Prostate gland (tissue), 2 donors: ENCODE measurements at regions of chr1 and their contacts with region 1.

Region 1: DNA sequence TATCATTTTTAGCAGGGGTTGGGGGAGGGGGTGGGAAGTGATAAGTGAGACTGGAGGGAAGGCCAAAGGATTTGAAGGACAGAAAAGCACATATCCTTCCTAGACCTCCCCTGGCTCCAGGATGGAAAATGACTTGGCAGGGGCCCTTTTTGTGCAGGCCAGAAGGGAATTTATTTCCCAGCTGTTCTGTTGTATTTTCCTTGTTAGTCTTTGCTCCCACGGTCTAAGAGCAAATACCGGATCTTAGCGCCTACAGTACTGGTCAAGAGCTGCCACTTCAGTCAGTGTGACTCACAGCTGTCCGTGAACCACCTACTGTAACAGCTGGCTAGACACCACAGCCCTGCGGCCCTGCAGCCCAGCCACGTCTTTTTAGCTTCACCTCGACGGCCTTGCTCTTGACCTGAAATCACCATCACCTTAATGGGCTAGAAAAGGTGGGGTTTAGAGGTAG is 51.0 kb upstream of the ERRFI1 start:
- DNase-seq: peak; percentile 48
- H3K4me3 ChIP-seq: no peak overlapping the region
- H3K27ac ChIP-seq: peak overlapping the region; percentile 77 to 85
- H3K4me1 ChIP-seq: peaks cover 9% of the 10 kb centered on the region
- H3K27me3 ChIP-seq: no peaks in the 10 kb centered on the region
- CTCF ChIP-seq: peak in 1 of 4 experiments; percentile 14
- POLR2A ChIP-seq: no peak

Region 2: GRCh38 chr1:8040586-8040985 is 36.6 kb before region 1 on chr1:
- intact Hi-C with region 1: no loop called
- DNase-seq: peak; percentile 92
- H3K4me3 ChIP-seq: no peak overlapping the region
- H3K27ac ChIP-seq: peak overlapping the region; percentile 41 to 58
- H3K4me1 ChIP-seq: no peaks in the 10 kb centered on the region
- H3K27me3 ChIP-seq: no peaks in the 10 kb centered on the region
- CTCF ChIP-seq: no peak
- POLR2A ChIP-seq: no peak

Region 3: GRCh38 chr1:8121261-8122170 is 44.4 kb after region 1 on chr1:
- intact Hi-C with region 1: loop called (anchors 5 kb)
- DNase-seq: peak; percentile 78
- H3K4me3 ChIP-seq: no peak overlapping the region
- H3K27ac ChIP-seq: peak overlapping the region; percentile 80 to 81
- H3K4me1 ChIP-seq: no peaks in the 10 kb centered on the region
- H3K27me3 ChIP-seq: no peaks in the 10 kb centered on the region
- CTCF ChIP-seq: no peak
- POLR2A ChIP-seq: no peak

Region 4: GRCh38 chr1:8456308-8456912 is 379.3 kb after region 1 on chr1:
- intact Hi-C with region 1: no loop called
- DNase-seq: no peak
- H3K4me3 ChIP-seq: no peak overlapping the region
- H3K27ac ChIP-seq: peak overlapping the region; percentile 41 to 53
- H3K4me1 ChIP-seq: peaks cover 12% of the 10 kb centered on the region
- H3K27me3 ChIP-seq: no peaks in the 10 kb centered on the region
- CTCF ChIP-seq: no peak
- POLR2A ChIP-seq: no peak